BJ (cell line): ENCODE measurements at regions of chr5 and their contacts with region 1.

Region 1: GRCh38 chr5:181223058-181223728 is at the start of gene TRIM41:
- DNase-seq: peak; percentile 85
- H3K4me3 ChIP-seq: peak within 1 kb of the TSS; percentile 65
- H3K27me3 ChIP-seq: no peaks in the 10 kb centered on the region
- CTCF ChIP-seq: no peak
- polyA plus RNA-seq, gene TRIM41: 15.2 and 15.9 TPM in 2 replicates

Region 2: DNA sequence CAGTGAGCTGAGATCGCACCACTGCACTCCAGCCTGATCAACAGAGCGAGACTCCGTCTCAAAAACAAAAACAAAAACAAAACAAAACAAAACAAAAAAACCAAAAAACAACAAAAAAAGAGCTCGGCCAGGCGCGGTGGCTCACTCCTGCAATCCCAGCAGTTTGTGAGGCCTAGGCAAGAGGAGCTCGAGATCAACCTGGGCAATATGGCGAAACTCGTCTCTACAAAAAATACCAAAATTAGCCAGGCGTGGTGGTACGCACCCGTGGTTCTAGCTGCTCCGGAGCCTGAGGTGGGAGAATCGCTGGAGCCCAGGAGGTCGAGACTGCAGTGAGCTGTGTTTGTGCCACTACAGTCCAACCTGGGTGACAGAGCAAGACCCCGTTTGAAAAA is 38.3 kb before region 1 on chr5:
- CTCF ChIA-PET with region 1: interaction called, 11 read pairs
- POLR2A ChIA-PET with region 1: no interaction called
- DNase-seq: no peak
- H3K4me3 ChIP-seq: peak overlapping the region; percentile 10; the same call in 1 of the 2 replicates
- H3K27me3 ChIP-seq: no peaks in the 10 kb centered on the region
- CTCF ChIP-seq: no peak

Region 3: DNA sequence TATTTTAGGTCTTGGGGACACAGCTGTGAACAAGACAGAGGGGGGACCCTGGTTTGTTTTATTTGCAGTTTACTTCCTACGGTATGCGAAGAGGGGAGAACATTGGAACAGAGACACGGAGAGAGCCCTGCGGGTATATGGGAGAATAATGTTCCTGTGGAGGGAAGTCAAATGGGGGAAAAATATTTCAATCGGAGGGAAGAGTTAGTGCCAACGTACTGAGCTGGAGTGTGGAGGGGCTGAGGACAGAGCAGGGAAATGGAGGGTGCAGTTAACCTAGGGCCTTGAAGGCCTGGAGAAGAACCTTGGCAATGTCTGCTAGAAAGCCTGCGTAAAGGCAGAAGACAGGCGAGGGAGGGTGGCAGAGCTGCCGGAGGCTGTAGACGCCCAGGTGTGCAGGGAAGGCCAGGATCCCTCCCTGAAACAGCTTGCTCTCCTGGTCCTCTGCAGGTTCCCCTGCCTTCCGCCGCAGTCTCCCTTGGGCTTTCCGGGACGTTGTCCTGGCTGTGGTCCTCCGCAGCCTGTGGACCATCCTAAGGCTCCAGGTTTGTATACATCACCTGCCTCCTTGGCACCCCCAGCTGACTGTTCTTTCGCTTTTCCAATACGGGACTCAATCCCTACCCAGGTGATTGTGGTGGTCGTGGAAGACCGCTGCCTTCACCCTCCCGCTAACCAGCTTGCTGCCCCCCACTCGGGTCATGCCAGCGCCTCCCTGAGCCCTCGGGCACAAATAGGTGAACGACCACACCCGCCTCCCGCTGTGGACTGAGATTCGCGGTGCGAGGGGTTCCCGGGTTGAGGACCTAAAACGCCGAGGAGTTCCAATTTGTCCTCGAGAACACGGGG is 22.5 kb after region 1 on chr5:
- CTCF ChIA-PET with region 1: no interaction called
- POLR2A ChIA-PET with region 1: interaction called, 10 read pairs
- DNase-seq: no peak
- H3K4me3 ChIP-seq: peak overlapping the region; percentile 88
- H3K27me3 ChIP-seq: no peaks in the 10 kb centered on the region
- CTCF ChIP-seq: no peak